Posterior vena cava (tissue), 2 donors: ENCODE measurements at regions of chr12 and their contacts with region 1.

Region 1: GRCh38 chr12:74579981-74580380 is 42.3 kb downstream of the ATXN7L3B start:
- DNase-seq: no peak

Region 2: GRCh38 chr12:74559728-74560127 is 20.3 kb before region 1 on chr12:
- intact Hi-C with region 1: loop called in 1 of 2 experiments (anchors 1 kb)
- DNase-seq: no peak

Region 3: DNA sequence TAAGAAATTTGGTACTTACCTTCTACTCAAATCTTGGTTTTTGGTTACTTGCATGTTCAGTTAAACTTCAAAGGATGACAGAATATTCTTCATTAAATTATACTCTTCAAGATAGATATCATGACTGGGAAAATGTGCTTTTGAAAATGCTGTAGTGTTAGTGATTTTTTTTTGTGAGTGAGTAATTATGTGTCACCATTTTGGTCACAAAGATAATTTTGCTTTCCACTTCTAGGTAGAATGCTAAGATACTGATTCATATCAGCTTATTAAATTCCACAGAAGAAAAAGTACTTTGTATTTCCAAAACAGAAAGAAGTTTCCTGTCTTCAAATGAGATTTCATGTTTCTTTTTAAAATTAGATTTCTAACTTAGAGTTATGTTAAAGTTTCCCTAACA is 18.8 kb after region 1 on chr12:
- intact Hi-C with region 1: no loop called
- DNase-seq: no peak